Activated CD4-positive, alpha-beta T cell treated with anti-CD3 and anti-CD28 coated beads, Interleukin-2, amount 10 ng/mL, durations not matched to agents 24 days and 14 days (primary cell): ENCODE measurements at regions of chr2 and their contacts with region 1.

Region 1: DNA sequence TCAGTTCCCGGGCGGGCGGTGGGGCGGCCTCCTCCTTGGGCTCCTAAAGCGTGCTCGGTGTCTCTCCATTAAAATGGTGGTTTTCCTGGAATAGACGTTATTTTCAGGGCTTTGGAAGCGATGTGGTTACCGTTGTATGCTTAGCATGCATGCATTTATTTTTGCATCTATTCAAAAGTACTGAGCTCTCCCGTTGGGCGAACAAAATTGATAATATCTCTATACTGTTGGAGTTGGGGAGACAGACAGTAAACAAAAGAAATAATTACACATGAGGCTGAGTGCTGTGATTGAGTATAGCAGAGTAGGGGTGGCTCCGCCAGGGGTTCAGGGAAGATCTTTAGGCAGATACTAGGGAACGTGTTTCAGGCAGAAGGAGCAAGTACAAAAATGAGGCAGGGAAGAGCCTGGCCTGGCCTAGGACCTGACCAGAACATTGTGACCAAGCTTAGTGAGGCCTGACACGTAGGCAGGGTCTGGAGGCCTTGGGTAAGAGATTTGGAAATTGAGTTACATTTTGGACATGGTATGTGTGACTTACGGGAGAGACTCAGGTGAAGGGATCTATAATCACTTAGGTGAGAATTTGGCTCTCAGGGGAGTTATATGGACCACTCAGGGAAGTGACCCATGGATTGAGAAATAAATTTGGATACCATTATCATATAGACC is 674 bp downstream of the NCAPH start:
- DNase-seq: peak; percentile 69
- H3K4me3 Mint-ChIP-seq: peak overlapping the region; percentile 91
- H3K27ac Mint-ChIP-seq: peak overlapping the region; percentile 88
- H3K4me1 Mint-ChIP-seq: peaks cover 49% of the 10 kb centered on the region
- H3K27me3 Mint-ChIP-seq: no peaks in the 10 kb centered on the region

Region 2: GRCh38 chr2:96305091-96305978 is 30.9 kb before region 1 on chr2 and contains the start of gene SNRNP200:
- intact Hi-C with region 1: loop called (anchors 1 kb)
- DNase-seq: peak; percentile 97
- H3K4me3 Mint-ChIP-seq: peak within 1 kb of the TSS; percentile 100
- H3K27ac Mint-ChIP-seq: peak within 1 kb of the TSS; percentile 99
- H3K4me1 Mint-ChIP-seq: peaks cover 56% of the 10 kb centered on the region
- H3K27me3 Mint-ChIP-seq: no peaks in the 10 kb centered on the region
- total RNA-seq, gene SNRNP200: 197 and 203 TPM in 2 replicates